Sigmoid colon (tissue), 7 donors: ENCODE measurements at regions of chr22 and their contacts with region 1.

Region 1: DNA sequence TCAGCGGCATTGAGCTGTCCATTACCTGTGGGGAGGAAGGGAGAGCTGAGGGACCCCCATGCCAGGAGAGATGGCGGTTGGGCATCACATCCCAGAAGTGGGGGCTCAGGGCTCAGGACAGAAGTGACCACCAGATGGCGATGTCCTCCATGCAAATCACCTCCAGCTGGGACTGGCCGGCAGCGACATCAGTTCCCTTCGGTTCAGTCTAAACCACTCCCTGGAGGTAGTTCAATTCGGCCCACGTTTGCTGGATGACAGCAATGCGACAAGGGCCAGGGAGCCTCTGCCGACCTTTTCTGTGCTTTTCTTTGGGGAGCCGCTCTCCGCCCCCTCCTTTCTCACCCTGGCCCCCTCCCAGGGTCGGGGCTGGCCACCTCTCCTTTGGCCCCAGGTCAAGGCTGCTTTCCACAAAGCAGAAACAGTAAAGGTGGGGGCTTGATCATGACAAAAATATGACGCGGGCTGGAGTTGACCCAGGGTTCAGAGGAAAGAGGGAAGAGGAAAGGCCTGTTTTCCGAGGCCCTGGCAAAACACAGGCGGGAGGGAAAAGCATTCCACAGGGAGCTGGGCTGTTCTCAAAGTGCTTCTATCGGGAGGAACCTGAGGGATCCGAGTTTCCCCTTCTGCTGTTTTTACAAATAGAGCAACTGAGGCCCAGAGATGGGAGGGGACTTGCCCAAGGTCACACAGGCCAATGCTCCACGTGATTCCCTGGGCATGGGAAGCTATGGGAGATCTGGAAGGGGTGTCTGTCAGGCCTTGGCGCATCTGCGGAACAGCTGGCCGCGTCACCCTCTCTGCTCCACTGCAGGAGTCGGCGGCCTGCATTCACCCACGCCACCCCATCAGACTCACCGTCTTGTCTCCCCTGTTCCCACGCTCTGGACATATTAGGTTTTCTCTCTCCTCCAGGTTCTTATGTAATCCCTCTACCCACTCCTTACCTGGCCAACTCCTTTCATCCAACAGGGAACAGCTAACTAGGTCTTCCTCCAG is 54.7 kb downstream of the FBXO7 start:
- DNase-seq: peak; percentile 96
- H3K4me3 ChIP-seq: no peak overlapping the region
- H3K27ac ChIP-seq: peak overlapping the region; percentile 46 to 71 (median 64)
- H3K4me1 ChIP-seq: peaks cover 0 to 32% (median 25%) of the 10 kb centered on the region in 4 donors
- H3K27me3 ChIP-seq: no peaks in the 10 kb centered on the region
- CTCF ChIP-seq: peak; percentile 86 to 91 (median 89)
- EP300 ChIP-seq: no peak
- POLR2A ChIP-seq: no peak

Region 2: GRCh38 chr22:32622004-32622743 is 92.9 kb after region 1 on chr22:
- intact Hi-C with region 1: loop called (anchors 2 kb)
- DNase-seq: peak; percentile 89
- H3K4me3 ChIP-seq: no peak overlapping the region
- H3K27ac ChIP-seq: peak overlapping the region; percentile 72 to 88 (median 82)
- H3K4me1 ChIP-seq: peaks cover 0 to 59% (median 54%) of the 10 kb centered on the region in 4 donors
- H3K27me3 ChIP-seq: no peaks in the 10 kb centered on the region
- CTCF ChIP-seq: no peak
- EP300 ChIP-seq: no peak
- POLR2A ChIP-seq: no peak

Region 3: DNA sequence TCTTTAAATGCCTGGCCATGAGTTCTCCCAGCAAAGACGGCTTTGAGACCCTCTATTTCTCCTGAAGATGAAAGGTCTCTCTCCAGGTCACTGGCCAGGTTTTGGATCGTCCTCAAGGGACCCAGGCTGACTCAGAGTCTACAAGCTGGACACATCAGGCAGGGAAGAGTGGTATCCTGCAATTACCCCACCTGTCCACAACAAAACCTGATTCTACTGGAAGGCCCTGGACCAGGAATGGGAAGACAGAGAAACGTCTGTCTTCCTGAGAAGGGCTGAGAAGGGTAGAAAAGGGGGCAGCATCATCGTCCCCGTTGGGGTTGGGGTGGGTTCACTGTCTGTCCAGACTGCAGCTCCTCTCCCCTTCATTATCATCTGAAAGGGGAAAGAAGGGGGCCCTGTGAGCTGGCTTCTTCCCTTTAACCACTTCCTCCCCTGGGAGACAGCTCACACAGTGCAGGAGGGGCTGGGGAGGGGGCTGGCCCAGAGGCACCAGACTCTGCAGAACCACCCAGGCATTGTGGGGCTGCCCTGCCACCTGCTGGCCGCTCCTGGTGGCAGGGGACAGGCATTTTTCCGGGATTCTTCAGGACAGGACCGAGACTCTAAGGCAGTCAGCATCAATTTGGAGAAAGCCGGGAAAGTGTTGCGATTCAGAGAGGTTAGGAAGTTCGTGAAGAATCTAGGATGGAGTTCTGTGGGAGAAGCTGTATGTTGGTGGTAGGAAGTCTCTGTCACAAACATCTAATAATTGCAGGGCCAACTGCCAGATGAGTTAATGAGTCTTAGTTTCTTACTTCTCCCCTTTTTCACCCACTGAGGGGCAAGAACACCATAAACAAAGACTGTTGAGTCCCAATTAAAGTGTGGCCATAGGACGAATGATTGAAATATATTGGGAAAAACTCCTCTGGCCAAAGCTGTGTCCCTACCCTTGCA is 471.3 kb after region 1 on chr22:
- intact Hi-C with region 1: loop called (anchors 1 kb)
- DNase-seq: peak; percentile 76
- H3K4me3 ChIP-seq: no peak overlapping the region
- H3K27ac ChIP-seq: no peak overlapping the region
- H3K4me1 ChIP-seq: no peaks in the 10 kb centered on the region
- H3K27me3 ChIP-seq: no peaks in the 10 kb centered on the region
- CTCF ChIP-seq: peak; percentile 63 to 90 (median 80)
- EP300 ChIP-seq: no peak
- POLR2A ChIP-seq: no peak